HEK293 (cell line): ENCODE measurements at regions of chr7 and their contacts with region 1.

Region 1: DNA sequence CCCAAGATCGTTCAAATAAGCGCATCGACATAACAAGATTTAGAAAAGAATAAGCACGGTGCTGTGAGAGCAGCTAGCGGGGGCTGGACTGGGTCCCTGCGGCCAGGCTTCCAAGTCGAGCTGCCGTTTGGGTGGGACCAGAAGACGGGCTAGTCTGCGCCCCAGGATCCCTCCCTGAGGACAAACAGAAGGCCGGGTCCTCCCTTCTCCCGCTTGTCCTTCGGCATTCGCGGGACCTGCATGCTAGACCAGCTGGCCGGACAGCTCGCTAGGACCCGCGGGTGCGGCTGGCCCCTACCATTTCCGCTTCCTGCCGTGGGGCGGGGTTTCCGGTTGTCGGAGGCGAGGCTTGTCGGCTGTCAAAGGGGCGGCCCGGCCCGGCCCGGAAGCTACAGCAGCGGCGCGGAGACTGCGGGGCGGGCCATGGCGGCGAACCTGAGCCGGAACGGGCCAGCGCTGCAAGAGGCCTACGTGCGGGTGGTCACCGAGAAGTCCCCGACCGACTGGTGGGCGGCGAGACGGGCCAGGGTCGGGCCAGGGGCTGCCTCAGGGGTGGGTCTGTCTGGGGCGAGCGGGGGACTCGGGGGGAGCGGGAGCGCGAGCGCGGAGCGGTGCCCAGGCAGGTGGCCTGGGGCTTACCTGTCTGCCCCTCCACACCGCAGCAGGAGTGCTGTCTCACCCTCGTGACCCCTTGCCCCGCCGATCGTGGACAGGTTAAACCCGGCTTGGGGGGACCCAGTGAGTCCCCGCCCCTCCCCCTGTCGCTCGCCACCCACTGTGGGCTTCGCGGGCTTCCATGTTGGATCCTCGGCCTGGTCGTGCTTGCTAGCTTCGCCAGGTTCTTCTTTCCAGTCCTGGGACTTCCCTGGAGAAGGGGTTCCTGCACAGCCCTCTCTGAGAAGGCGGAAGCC is at the start of gene DBNL:
- H3K4me3 ChIP-seq: peak within 1 kb of the TSS; percentile 96
- H3K27ac ChIP-seq: peak within 1 kb of the TSS; percentile 63
- H3K4me1 ChIP-seq: peaks cover 6% of the 10 kb centered on the region; the same call in 1 of the 2 replicates
- CTCF ChIP-seq: no peak

Region 2: GRCh38 chr7:43815373-43815772 is 229.2 kb before region 1 on chr7:
- CTCF ChIA-PET with region 1: no interaction called
- POLR2A ChIA-PET with region 1: no interaction called
- H3K4me3 ChIP-seq: no peak overlapping the region
- H3K27ac ChIP-seq: no peak overlapping the region
- H3K4me1 ChIP-seq: no peaks in the 10 kb centered on the region
- CTCF ChIP-seq: no peak

Region 3: GRCh38 chr7:44065436-44066118 is 21.0 kb after region 1 on chr7 and contains the start of gene PGAM2:
- CTCF ChIA-PET with region 1: no interaction called
- POLR2A ChIA-PET with region 1: interaction called, 16 read pairs
- H3K4me3 ChIP-seq: no peak within 1 kb of the TSS
- H3K27ac ChIP-seq: no peak within 1 kb of the TSS
- H3K4me1 ChIP-seq: no peaks in the 10 kb centered on the region
- CTCF ChIP-seq: no peak

Region 4: GRCh38 chr7:44498230-44498954 is 453.8 kb after region 1 on chr7:
- CTCF ChIA-PET with region 1: no interaction called
- POLR2A ChIA-PET with region 1: no interaction called
- H3K4me3 ChIP-seq: no peak overlapping the region
- H3K27ac ChIP-seq: no peak overlapping the region
- H3K4me1 ChIP-seq: no peaks in the 10 kb centered on the region
- CTCF ChIP-seq: no peak